ENCODE measurements at regions of chr12 and their contacts with region 1.

Region 1: DNA sequence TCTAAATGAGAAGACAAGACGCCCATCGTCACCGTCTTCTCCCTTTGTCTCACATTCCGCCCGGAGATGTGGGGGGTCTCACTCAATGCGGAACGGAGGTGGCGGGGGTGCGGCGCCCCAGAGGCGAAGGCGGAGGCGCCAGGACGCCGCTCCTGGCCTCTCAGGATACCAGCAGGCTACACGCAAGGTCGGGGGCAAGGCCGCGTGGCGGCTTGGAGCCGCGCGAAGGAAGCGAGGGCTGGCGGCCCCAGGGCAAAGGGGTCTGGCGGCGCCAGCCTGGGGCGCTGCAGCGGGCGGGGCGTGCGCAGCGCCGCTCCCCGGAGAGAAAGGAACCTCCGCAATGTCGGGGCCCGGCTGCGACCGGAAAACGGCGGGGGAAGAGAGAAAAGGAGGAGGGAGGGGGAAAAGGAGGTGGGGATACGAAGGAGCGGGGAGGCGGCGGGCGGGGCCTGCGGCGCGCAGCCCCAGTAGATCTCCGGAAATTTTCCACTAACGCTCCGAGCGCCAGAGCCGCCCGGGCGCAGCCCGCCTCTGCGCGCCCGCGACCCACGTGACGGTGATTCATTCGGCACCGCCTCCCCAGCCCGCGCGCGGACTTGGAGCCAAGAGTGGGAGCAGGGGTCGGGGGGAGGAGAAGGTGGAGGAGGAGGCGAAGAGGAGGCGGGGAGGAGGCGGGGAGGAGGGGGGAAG is 10.5 kb upstream of the SLC38A2 start:
- DNase-seq: peak; percentile 99
- ATAC-seq: peak; percentile 95

Region 2: GRCh38 chr12:46372544-46373110 is 10.5 kb before region 1 on chr12 and contains the start of gene SLC38A2:
- intact Hi-C with region 1: loop called (anchors 1 kb)
- DNase-seq: peak; percentile 100
- ATAC-seq: peak; percentile 98
- total RNA-seq, gene SLC38A2: 161 TPM

Region 3: GRCh38 chr12:46430340-46430948 is 47.3 kb after region 1 on chr12:
- intact Hi-C with region 1: loop called (anchors 5 kb)
- DNase-seq: no peak
- ATAC-seq: peak; percentile 50

Region 4: GRCh38 chr12:46473634-46474329 is 90.7 kb after region 1 on chr12:
- intact Hi-C with region 1: loop called (anchors 5 kb)
- DNase-seq: no peak
- ATAC-seq: peak; percentile 87

Region 5: GRCh38 chr12:46556105-46556559 is 173.0 kb after region 1 on chr12:
- intact Hi-C with region 1: loop called (anchors 5 kb)
- DNase-seq: no peak
- ATAC-seq: peak; percentile 91

Region 6: GRCh38 chr12:47551426-47551851 is 1168.3 kb after region 1 on chr12:
- intact Hi-C with region 1: no loop called
- DNase-seq: no peak
- ATAC-seq: peak; percentile 97